ENCODE measurements at regions of chr1 and their contacts with region 1.

Region 1: GRCh38 chr1:216749232-216749631 is 26.0 kb upstream of the ESRRG start:
- DNase-seq: no peak
- H3K4me3 ChIP-seq: no peak overlapping the region
- H3K27ac ChIP-seq: no peak overlapping the region
- H3K4me1 ChIP-seq: no peaks in the 10 kb centered on the region
- H3K27me3 ChIP-seq: peaks cover 11% of the 10 kb centered on the region
- CTCF ChIP-seq: no peak

Region 2: GRCh38 chr1:216670118-216670900 is 78.9 kb before region 1 on chr1:
- CTCF ChIA-PET with region 1: no interaction called
- POLR2A ChIA-PET with region 1: no interaction called
- intact Hi-C with region 1: no loop called
- DNase-seq: peak; percentile 6
- H3K4me3 ChIP-seq: no peak overlapping the region
- H3K27ac ChIP-seq: no peak overlapping the region
- H3K4me1 ChIP-seq: no peaks in the 10 kb centered on the region
- H3K27me3 ChIP-seq: peaks cover 3% of the 10 kb centered on the region
- CTCF ChIP-seq: no peak

Region 3: GRCh38 chr1:217333939-217334338 is 584.7 kb after region 1 on chr1:
- CTCF ChIA-PET with region 1: no interaction called
- POLR2A ChIA-PET with region 1: no interaction called
- intact Hi-C with region 1: loop called (anchors 5 kb)
- DNase-seq: peak; percentile 58
- H3K4me3 ChIP-seq: no peak overlapping the region
- H3K27ac ChIP-seq: no peak overlapping the region
- H3K4me1 ChIP-seq: no peaks in the 10 kb centered on the region
- H3K27me3 ChIP-seq: no peaks in the 10 kb centered on the region
- CTCF ChIP-seq: peak; percentile 77